Activated CD8-positive, alpha-beta memory T cell treated with anti-CD3 and anti-CD28 coated beads, Interleukin-2, amount 10 ng/mL, durations not matched to agents 7 days and 5 days (primary cell): ENCODE measurements at regions of chr19 and their contacts with region 1.

Region 1: GRCh38 chr19:12064590-12065538 is at the start of gene ZNF844:
- DNase-seq: peak; percentile 76
- ATAC-seq: peak; percentile 84
- H3K4me3 Mint-ChIP-seq: peak within 1 kb of the TSS; percentile 72
- H3K27ac Mint-ChIP-seq: peak within 1 kb of the TSS; percentile 76
- H3K4me1 Mint-ChIP-seq: peaks cover 8% of the 10 kb centered on the region
- H3K27me3 Mint-ChIP-seq: no peaks in the 10 kb centered on the region
- total RNA-seq, gene ZNF844: 1.3 to 1.5 TPM

Region 2: DNA sequence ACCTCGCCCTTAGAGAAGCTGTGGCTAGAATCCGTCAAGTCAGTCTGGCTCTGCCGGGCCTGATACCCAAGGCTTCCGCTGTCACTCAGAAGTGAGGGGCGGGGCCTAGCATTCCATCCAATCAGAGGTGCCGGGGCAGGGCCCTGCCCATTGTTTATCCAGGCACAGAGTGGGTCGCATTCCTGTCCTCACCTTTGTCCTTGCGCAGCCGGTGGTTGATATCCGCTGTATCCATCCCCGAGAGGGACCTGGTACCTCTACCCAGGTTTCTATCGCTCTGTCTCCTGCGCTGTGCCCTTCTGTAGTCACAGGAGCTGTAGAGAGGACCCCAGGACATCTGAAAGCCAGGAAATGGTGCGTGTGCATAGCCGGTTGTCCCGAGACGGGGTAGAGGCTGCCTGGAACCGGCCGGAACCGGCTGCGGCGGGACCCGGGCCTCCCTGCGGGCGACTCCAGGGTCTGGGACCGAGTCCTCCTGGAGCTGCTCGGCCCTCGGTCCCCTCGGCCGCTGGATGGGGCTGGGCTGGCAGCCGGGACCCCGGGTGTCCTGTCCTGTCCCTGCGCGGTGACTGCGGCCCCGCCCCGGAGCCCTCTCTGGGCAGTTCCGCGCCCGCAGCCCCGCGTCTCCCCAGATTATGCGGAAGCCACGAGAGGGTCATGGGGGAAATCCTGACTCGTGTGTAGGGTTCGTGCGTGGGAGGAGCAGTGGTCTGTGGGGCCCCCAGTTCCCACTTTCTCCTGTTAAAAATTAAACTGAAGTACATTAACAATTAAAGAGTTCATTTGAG is 99.8 kb before region 1 on chr19 and contains the start of gene ZNF763:
- CTCF ChIA-PET with region 1: interaction called, 14 read pairs
- DNase-seq: peak; percentile 95
- ATAC-seq: peak; percentile 97
- H3K4me3 Mint-ChIP-seq: peak within 1 kb of the TSS; percentile 86
- H3K27ac Mint-ChIP-seq: peak within 1 kb of the TSS; percentile 90
- H3K4me1 Mint-ChIP-seq: peaks cover 22% of the 10 kb centered on the region
- H3K27me3 Mint-ChIP-seq: no peaks in the 10 kb centered on the region
- total RNA-seq, gene ZNF763: 0.85 to 0.98 TPM

Region 3: DNA sequence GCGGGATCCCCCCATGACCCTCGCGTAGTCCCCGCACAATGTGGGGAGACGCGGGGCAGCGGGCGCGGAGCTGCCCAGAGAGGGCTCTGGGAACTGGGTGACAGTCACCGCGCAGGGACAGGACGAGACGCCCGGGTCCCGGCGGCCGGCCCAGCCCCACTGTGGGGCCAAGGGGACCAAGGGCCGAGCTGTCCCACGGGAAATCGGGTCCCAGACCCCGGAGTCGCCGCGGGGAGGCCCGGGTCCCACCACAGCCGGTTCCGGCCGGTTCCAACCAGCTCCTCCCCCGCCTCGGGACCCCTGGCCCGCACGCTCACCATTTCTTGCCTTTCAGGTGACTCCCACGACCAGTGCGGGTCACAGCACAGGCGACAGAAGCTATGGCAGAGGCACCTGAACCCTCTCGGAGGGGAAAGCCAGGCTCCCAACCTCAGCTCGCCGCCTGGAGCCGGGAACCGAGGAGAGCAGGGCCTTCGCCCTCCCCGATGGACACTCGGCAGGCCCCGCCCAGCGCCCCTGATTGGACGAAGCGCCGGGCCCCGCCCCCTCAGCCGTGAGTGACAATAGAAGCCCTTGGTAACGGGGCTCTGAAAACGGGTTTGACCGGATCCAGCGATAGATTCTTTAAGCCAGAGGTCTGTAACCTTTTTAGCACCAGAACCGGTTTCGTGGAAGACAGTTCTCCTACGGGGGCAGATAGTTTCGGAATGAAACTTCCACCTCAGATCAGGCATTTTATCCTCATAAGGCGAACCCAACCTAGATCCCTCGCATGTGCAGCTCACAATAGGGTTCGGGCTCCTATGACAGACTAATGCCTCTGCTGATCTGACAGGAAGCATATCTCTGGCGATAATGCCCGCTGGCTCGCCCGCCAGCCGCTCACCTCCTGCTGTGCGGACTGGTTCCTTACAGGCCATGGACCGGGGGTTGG is 29.4 kb before region 1 on chr19 and contains the start of gene ZNF433:
- CTCF ChIA-PET with region 1: interaction called, 11 read pairs
- DNase-seq: peak; percentile 69
- ATAC-seq: peak; percentile 94
- H3K4me3 Mint-ChIP-seq: peak within 1 kb of the TSS; percentile 65
- H3K27ac Mint-ChIP-seq: peak within 1 kb of the TSS; percentile 54
- H3K4me1 Mint-ChIP-seq: peaks cover 4% of the 10 kb centered on the region
- H3K27me3 Mint-ChIP-seq: no peaks in the 10 kb centered on the region
- total RNA-seq, gene ZNF433: 0.20 to 0.82 TPM